CD4-positive, alpha-beta T cell (primary cell): ENCODE measurements at regions of chr19 and their contacts with region 1.

Region 1: DNA sequence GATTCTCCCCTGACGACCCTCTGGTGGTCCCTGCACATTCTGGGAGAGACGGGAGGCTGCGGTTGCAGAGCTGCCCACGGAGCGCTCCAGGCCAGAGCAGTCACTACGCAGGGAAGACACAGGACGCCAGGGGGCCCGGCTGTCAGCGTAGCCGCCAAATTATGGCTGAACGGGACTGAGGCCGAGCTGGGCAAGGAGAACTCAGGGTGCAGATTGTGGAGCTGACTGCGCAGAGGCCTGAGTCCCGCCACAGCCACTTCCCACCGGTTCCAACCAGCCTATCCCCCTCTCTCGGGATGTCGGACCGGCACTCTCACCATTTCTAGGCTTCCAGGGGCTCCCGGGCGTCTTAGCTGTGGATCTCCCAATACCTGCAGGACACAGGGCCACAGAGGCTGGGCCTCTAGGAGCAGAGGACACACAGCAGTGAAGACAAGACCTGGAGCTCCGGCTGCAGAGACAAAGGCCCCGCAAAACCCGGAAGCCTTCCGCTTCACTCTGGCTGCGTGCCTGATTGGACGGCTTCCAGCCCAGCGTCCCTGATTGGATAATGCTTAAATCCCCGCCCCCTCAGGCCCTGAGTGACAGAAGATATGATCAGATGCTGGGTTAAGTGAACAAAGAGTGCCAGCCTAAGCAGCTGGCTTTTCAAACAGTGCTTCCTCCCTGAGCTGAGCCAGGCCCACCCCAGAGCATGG is at the start of gene ZNF737:
- DNase-seq: peak; percentile 86 to 97 (median 91)
- ATAC-seq: peak; percentile 96
- H3K4me3 ChIP-seq: peak within 1 kb of the TSS; percentile 82
- H3K4me3 Mint-ChIP-seq: peak within 1 kb of the TSS; percentile 100
- H3K27ac ChIP-seq: peak within 1 kb of the TSS; percentile 80 to 88
- H3K27ac Mint-ChIP-seq: peak within 1 kb of the TSS; percentile 98
- H3K4me1 ChIP-seq: peaks cover 10% of the 10 kb centered on the region
- H3K4me1 Mint-ChIP-seq: peaks cover 29% of the 10 kb centered on the region
- H3K27me3 ChIP-seq: no peaks in the 10 kb centered on the region
- H3K27me3 Mint-ChIP-seq: no peaks in the 10 kb centered on the region
- CTCF ChIP-seq: peak; percentile 30
- total RNA-seq, gene ZNF737: 11.0 to 11.7 TPM

Region 2: GRCh38 chr19:19597809-19598306 is 967.6 kb before region 1 on chr19:
- CTCF ChIA-PET with region 1: no interaction called
- POLR2A ChIA-PET with region 1: no interaction called
- intact Hi-C with region 1: no loop called
- DNase-seq: peak in 10 of 14 experiments; percentile 20 to 96 (median 40)
- ATAC-seq: peak; percentile 73
- H3K4me3 ChIP-seq: no peak overlapping the region
- H3K4me3 Mint-ChIP-seq: peak overlapping the region; percentile 55
- H3K27ac ChIP-seq: peak overlapping the region; percentile 94 to 97
- H3K27ac Mint-ChIP-seq: peak overlapping the region; percentile 95
- H3K4me1 ChIP-seq: peaks cover 96% of the 10 kb centered on the region
- H3K4me1 Mint-ChIP-seq: peaks cover 62% of the 10 kb centered on the region
- H3K27me3 ChIP-seq: no peaks in the 10 kb centered on the region
- H3K27me3 Mint-ChIP-seq: no peaks in the 10 kb centered on the region
- CTCF ChIP-seq: no peak

Region 3: GRCh38 chr19:20167020-20167644 is 398.3 kb before region 1 on chr19 and contains the start of gene ZNF486:
- CTCF ChIA-PET with region 1: no interaction called
- POLR2A ChIA-PET with region 1: interaction called, 19 read pairs
- intact Hi-C with region 1: loop called in 1 of 2 experiments (anchors 10 kb)
- DNase-seq: peak; percentile 83 to 97 (median 88)
- ATAC-seq: peak; percentile 97
- H3K4me3 ChIP-seq: peak within 1 kb of the TSS; percentile 67
- H3K4me3 Mint-ChIP-seq: peak within 1 kb of the TSS; percentile 98
- H3K27ac ChIP-seq: no peak within 1 kb of the TSS
- H3K27ac Mint-ChIP-seq: peak within 1 kb of the TSS; percentile 87
- H3K4me1 ChIP-seq: peaks cover 13% of the 10 kb centered on the region
- H3K4me1 Mint-ChIP-seq: peaks cover 63% of the 10 kb centered on the region
- H3K27me3 ChIP-seq: no peaks in the 10 kb centered on the region
- H3K27me3 Mint-ChIP-seq: no peaks in the 10 kb centered on the region
- CTCF ChIP-seq: no peak
- total RNA-seq, gene ZNF486: 3.0 to 3.8 TPM

Region 4: DNA sequence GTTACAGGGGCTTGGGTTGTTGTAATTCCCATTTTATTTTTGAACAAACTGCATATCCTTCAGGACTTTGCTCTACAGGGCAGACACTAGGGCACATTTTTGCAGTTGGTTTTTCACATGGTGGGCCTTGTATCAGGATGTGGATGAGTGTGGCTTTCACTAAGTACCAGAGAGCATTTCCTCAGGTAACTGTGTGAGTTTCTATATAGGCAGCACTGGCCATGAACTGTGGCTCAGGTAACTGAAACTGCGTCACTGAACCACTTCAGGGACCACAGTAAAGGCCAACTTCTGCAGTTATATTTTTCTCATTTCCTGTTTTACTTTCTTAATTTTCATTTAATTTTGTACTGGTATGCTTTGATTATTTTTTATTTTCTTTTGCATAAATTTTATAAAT is 232.0 kb before region 1 on chr19:
- CTCF ChIA-PET with region 1: no interaction called
- POLR2A ChIA-PET with region 1: no interaction called
- intact Hi-C with region 1: no loop called
- DNase-seq: peak in 1 of 14 experiments; percentile 10
- ATAC-seq: no peak
- H3K4me3 ChIP-seq: no peak overlapping the region
- H3K4me3 Mint-ChIP-seq: no peak overlapping the region
- H3K27ac ChIP-seq: no peak overlapping the region
- H3K27ac Mint-ChIP-seq: no peak overlapping the region
- H3K4me1 ChIP-seq: no peaks in the 10 kb centered on the region
- H3K4me1 Mint-ChIP-seq: no peaks in the 10 kb centered on the region
- H3K27me3 ChIP-seq: no peaks in the 10 kb centered on the region
- H3K27me3 Mint-ChIP-seq: no peaks in the 10 kb centered on the region
- CTCF ChIP-seq: no peak

Region 5: DNA sequence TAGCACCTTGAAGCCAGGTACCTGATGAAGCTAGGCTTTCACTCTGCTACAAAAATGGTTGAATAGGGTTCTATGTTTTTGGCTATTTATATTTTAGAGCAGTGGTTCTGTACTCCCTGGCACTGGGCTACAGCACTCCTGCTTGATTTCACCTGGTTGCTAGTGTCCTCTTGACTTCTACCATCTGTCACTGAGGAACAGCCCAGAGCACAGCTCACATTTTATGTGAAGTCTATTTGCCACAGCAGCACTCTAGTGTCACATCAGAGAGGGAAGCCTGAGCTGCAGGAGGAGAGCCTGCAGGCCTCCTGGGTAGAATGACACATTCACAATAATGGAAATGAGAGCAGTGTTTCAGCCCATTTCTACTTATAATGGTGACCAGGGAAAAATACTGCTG is 214.2 kb before region 1 on chr19:
- CTCF ChIA-PET with region 1: no interaction called
- POLR2A ChIA-PET with region 1: no interaction called
- intact Hi-C with region 1: no loop called
- DNase-seq: no peak
- ATAC-seq: no peak
- H3K4me3 ChIP-seq: no peak overlapping the region
- H3K4me3 Mint-ChIP-seq: no peak overlapping the region
- H3K27ac ChIP-seq: no peak overlapping the region
- H3K27ac Mint-ChIP-seq: no peak overlapping the region
- H3K4me1 ChIP-seq: no peaks in the 10 kb centered on the region
- H3K4me1 Mint-ChIP-seq: no peaks in the 10 kb centered on the region
- H3K27me3 ChIP-seq: no peaks in the 10 kb centered on the region
- H3K27me3 Mint-ChIP-seq: no peaks in the 10 kb centered on the region
- CTCF ChIP-seq: no peak

Region 6: GRCh38 chr19:20640545-20640944 is 75.1 kb after region 1 on chr19:
- CTCF ChIA-PET with region 1: no interaction called
- POLR2A ChIA-PET with region 1: no interaction called
- intact Hi-C with region 1: loop called in 1 of 2 experiments (anchors 5 kb)
- DNase-seq: no peak
- ATAC-seq: no peak
- H3K4me3 ChIP-seq: no peak overlapping the region
- H3K4me3 Mint-ChIP-seq: no peak overlapping the region
- H3K27ac ChIP-seq: no peak overlapping the region
- H3K27ac Mint-ChIP-seq: no peak overlapping the region
- H3K4me1 ChIP-seq: no peaks in the 10 kb centered on the region
- H3K4me1 Mint-ChIP-seq: no peaks in the 10 kb centered on the region
- H3K27me3 ChIP-seq: no peaks in the 10 kb centered on the region
- H3K27me3 Mint-ChIP-seq: no peaks in the 10 kb centered on the region
- CTCF ChIP-seq: no peak

Region 7: DNA sequence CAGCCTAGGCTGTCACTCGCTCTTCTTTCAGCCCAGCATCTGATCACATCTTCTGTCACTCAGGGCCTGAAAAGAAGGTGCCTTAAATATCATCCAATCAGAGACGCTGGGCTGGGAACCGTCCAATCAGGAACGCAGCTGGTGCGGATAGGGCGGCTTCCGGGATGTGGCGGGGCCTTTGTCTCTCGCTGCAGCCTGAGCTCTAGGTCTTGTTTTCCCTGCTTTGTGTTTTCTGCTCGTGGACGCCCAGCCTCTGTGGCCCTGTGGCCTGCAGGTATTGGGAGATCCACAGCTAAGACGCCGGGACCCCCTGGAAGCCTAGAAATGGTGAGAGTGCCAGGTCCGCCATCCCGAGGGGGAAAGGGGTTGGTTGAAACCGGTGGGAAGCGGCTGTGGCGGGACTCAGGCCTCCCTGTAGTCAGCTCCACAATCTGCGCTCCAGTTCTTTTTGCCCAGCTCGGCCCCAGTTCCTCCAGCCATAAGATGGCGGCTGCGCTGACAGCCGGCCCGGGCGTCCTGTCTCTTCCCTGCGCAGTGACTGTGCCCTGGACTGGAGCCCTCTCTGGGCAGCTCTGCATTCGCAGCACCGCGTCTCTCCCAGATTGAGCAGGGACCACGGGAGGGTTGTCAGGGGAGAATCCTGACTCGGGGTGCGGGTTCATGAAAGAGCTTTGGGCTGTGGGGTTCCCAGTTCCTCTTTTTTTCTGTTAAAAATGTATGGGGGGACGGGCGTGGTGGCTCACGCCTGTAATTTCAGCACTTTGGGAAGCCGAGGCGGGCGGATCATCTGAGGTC is 357.8 kb after region 1 on chr19 and contains the start of gene ZNF85:
- CTCF ChIA-PET with region 1: no interaction called
- POLR2A ChIA-PET with region 1: interaction called, 21 read pairs
- intact Hi-C with region 1: no loop called
- DNase-seq: peak; percentile 79 to 97 (median 86)
- ATAC-seq: peak; percentile 99
- H3K4me3 ChIP-seq: peak within 1 kb of the TSS; percentile 83
- H3K4me3 Mint-ChIP-seq: peak within 1 kb of the TSS; percentile 96
- H3K27ac ChIP-seq: peak within 1 kb of the TSS; percentile 44 to 75
- H3K27ac Mint-ChIP-seq: peak within 1 kb of the TSS; percentile 89
- H3K4me1 ChIP-seq: peaks cover 12% of the 10 kb centered on the region
- H3K4me1 Mint-ChIP-seq: peaks cover 26% of the 10 kb centered on the region
- H3K27me3 ChIP-seq: no peaks in the 10 kb centered on the region
- H3K27me3 Mint-ChIP-seq: no peaks in the 10 kb centered on the region
- CTCF ChIP-seq: no peak
- total RNA-seq, gene ZNF85: 3.4 to 4.7 TPM

Region 8: GRCh38 chr19:21328885-21329605 is 763.6 kb after region 1 on chr19 and contains the start of gene ZNF708:
- CTCF ChIA-PET with region 1: no interaction called
- POLR2A ChIA-PET with region 1: interaction called, 16 read pairs
- intact Hi-C with region 1: no loop called
- DNase-seq: peak; percentile 41 to 96 (median 59)
- ATAC-seq: peak; percentile 91
- H3K4me3 ChIP-seq: peak within 1 kb of the TSS; percentile 99
- H3K4me3 Mint-ChIP-seq: peak within 1 kb of the TSS; percentile 96
- H3K27ac ChIP-seq: peak within 1 kb of the TSS; percentile 83 to 99
- H3K27ac Mint-ChIP-seq: peak within 1 kb of the TSS; percentile 98
- H3K4me1 ChIP-seq: peaks cover 22% of the 10 kb centered on the region
- H3K4me1 Mint-ChIP-seq: peaks cover 50% of the 10 kb centered on the region
- H3K27me3 ChIP-seq: no peaks in the 10 kb centered on the region
- H3K27me3 Mint-ChIP-seq: no peaks in the 10 kb centered on the region
- CTCF ChIP-seq: no peak
- total RNA-seq, gene ZNF708: 15.5 to 16.4 TPM